Calu3 (cell line): ENCODE measurements at regions of chr12 and their contacts with region 1.

Region 1: GRCh38 chr12:110338754-110339153 is 57.7 kb downstream of the ATP2A2 start:
- DNase-seq: no peak
- H3K4me3 Mint-ChIP-seq: peak overlapping the region; percentile 28
- H3K27ac Mint-ChIP-seq: peak overlapping the region; percentile 89
- H3K4me1 Mint-ChIP-seq: peaks cover 38% of the 10 kb centered on the region
- H3K27me3 Mint-ChIP-seq: no peaks in the 10 kb centered on the region
- CTCF ChIP-seq: no peak

Region 2: DNA sequence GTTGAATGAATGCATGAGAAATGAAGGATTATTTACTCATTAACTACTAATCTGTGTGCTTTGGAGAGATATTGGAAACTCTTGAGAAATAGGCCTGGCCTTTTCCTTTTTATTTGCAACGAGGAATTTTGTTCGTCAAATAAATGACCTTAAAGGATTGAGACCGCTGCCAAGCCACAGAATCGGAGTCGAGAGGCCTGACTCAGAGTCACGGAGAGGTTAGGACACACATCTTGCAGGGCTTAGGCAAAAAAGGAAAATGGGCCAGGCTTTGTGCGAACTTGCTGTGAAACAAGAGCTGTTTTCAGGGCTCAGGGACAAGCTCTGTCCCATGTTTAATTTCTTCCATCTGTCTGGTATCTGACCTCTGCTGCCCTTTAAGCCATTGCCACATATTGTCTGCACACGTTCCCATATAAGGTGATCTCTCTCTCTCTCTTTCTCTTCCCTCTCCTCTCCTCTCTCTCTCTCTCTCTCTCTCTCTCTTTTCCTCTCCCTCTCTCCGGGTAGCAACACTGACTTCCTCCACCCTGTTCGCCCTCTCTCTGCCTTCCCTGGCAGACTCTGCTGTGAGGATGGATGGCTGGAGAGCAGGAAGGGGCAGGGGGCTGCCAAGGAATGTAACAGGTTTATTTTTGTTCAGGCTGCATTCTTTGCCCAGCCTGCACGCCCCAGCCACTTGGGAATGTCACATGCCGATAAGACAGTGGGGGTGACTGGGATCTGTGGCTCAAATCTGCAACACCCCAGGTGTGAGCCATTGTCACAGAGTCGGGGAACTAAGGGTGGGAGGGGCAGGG is 229.5 kb before region 1 on chr12:
- CTCF ChIA-PET with region 1: no interaction called
- intact Hi-C with region 1: loop called (anchors 5 kb)
- DNase-seq: peak; percentile 80
- H3K4me3 Mint-ChIP-seq: peak overlapping the region; percentile 65
- H3K27ac Mint-ChIP-seq: peak overlapping the region; percentile 94
- H3K4me1 Mint-ChIP-seq: peaks cover 25% of the 10 kb centered on the region
- H3K27me3 Mint-ChIP-seq: no peaks in the 10 kb centered on the region
- CTCF ChIP-seq: no peak

Region 3: DNA sequence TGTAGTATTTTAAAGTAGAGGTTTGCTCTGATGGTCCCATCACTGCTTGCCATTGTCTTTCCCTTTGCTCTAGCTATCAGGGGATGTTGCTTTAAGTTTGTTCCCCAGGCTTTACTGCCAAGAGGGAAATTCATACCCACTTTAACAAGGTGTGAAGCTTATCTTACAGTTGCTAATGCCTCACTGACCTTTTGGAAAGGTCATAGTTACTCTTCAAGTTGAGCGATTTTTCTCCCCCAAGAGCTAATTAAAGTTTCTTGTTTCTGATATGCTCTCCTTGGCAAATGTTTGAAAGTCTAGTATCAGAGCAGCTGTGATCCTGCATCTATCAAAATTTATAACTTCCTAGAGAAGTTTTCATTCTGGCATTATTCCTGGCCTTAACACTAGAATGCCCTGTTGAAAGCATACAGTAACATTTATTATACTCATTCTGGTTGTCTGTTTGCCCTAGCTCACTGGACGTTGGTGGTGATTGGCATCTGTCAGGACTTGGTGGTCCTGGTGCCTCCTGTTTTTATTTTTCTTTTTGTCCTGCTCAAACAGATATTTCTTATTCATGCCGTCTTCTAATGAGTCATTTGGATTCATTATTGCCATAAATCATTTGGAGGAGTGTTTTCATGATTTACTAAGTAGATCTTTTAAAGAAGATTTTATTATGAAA is 49.6 kb before region 1 on chr12:
- CTCF ChIA-PET with region 1: no interaction called
- intact Hi-C with region 1: loop called (anchors 5 kb)
- DNase-seq: no peak
- H3K4me3 Mint-ChIP-seq: no peak overlapping the region
- H3K27ac Mint-ChIP-seq: peak overlapping the region; percentile 18
- H3K4me1 Mint-ChIP-seq: peaks cover 34% of the 10 kb centered on the region
- H3K27me3 Mint-ChIP-seq: no peaks in the 10 kb centered on the region
- CTCF ChIP-seq: no peak

Region 4: DNA sequence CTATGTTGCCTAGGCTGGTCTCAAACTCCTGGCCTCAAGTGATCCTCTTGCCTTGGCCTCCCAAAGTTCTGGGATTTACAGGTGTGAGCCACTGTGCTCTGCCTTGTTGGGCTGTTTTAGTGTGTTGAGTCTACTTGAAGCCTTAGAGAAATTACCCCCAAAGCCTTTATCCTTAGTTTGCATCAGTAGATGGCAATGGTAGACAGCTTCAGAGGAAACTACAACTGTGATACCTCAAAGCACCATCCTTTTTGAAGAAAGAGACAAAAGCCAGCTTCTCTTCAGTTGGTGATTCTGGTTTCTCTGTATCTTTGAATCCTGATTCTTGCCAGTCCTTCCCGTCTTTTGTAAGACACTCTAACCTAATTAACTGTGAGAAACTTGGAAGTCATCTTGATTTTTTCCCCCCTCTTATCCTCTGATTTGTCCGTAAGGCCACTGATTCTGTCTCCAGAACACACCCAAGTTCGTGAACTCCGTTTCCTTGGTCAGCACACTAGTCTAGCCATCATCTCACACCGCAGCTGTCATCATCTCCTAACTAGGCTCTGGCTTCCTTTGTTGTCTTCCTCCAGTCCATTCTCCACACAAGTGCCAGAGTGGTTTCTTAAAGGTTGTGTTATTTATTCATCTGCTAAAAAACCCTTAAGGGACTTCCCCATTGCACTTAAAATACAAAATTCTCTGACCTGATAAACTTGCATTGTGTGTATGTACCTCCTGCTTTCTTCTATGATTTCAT is 37.5 kb before region 1 on chr12:
- CTCF ChIA-PET with region 1: no interaction called
- intact Hi-C with region 1: no loop called
- DNase-seq: no peak
- H3K4me3 Mint-ChIP-seq: no peak overlapping the region
- H3K27ac Mint-ChIP-seq: peak overlapping the region; percentile 15
- H3K4me1 Mint-ChIP-seq: peaks cover 25% of the 10 kb centered on the region
- H3K27me3 Mint-ChIP-seq: no peaks in the 10 kb centered on the region
- CTCF ChIP-seq: no peak